ENCODE measurements at regions of chr7 and their contacts with region 1.

Region 1: DNA sequence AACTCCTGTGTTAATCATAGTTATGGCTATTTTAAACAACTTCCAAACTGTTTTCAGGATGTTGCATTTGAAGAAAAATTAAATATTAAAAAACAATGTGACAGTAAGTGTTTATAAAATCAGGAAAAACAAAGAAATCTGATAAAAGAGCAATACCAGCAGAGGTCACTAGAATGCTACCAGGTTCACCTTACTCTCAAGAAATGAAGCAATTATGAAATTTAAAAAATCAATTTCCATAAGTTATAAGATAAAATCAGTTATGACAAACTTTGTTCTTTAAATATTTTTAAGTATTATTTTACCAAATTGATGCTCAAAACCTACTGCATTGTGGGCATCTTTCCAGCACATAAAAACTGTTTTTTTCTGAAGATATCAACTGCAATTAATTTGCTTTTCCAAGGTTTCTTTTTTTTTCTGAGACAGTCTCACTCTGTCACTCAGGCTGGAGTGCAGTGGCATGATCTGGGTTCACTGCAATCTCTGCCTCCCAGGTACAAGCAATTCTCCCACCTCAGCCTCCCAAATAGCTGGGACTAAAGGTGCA is 50.7 kb upstream of the RHEB start:
- DNase-seq: peak; percentile 47
- ATAC-seq: no peak
- H3K4me3 ChIP-seq: no peak overlapping the region
- H3K27ac ChIP-seq: no peak overlapping the region
- H3K4me1 ChIP-seq: peaks cover 4% of the 10 kb centered on the region
- H3K27me3 ChIP-seq: no peaks in the 10 kb centered on the region
- CTCF ChIP-seq: peak; percentile 67
- POLR2A ChIP-seq: no peak
- RAD21 ChIP-seq: peak; percentile 75

Region 2: GRCh38 chr7:151665368-151665767 is 94.9 kb after region 1 on chr7:
- CTCF ChIA-PET with region 1: no interaction called
- POLR2A ChIA-PET with region 1: no interaction called
- dilution Hi-C with region 1: no loop called
- in situ Hi-C with region 1: no loop called
- intact Hi-C with region 1: no loop called
- DNase-seq: peak; percentile 96
- ATAC-seq: peak; percentile 83
- H3K4me3 ChIP-seq: no peak overlapping the region
- H3K27ac ChIP-seq: peak overlapping the region; percentile 76; the same call in 1 of the 2 replicates
- H3K4me1 ChIP-seq: peaks cover 13% of the 10 kb centered on the region
- H3K27me3 ChIP-seq: no peaks in the 10 kb centered on the region
- CTCF ChIP-seq: no peak
- POLR2A ChIP-seq: no peak
- RAD21 ChIP-seq: no peak

Region 3: DNA sequence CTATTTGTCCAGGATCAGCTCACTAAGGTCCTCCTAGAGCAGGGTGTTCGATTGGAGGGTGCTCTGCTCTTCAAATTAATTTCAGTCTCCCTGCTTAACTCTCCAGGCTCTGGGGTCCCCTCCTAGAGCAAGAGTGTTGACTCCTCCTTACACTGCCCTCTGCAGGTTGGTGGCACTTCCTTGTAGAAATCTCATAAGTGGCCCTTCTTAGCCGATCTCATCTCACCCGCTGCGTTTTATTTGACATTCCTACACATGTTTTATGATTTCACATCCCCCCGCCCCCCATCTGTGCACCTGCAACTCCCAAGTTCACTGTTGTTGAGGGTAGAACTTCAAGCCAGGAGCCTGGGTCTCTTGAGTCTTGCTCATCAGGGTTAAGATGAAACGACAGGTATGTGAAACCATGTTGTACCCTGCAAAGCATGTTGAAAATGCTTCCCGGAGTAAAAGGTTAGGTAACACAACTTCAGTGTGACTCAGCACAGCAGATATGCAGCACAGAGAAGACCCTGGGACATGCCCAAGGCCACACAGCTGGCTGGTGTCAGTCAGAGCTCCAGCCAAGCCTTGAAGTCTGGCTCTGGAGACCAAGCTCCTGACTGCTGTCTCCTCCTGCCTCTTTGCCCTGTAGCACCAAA is 135.3 kb after region 1 on chr7:
- CTCF ChIA-PET with region 1: interaction called, 3 read pairs
- POLR2A ChIA-PET with region 1: no interaction called
- dilution Hi-C with region 1: no loop called
- in situ Hi-C with region 1: no loop called
- intact Hi-C with region 1: loop called (anchors 5 kb)
- DNase-seq: peak; percentile 52
- ATAC-seq: peak; percentile 74
- H3K4me3 ChIP-seq: no peak overlapping the region
- H3K27ac ChIP-seq: no peak overlapping the region
- H3K4me1 ChIP-seq: peaks cover 9% of the 10 kb centered on the region; the same call in 1 of the 2 replicates
- H3K27me3 ChIP-seq: no peaks in the 10 kb centered on the region; the same call in 1 of the 2 replicates
- CTCF ChIP-seq: peak; percentile 55
- POLR2A ChIP-seq: no peak
- RAD21 ChIP-seq: peak; percentile 63

Region 4: GRCh38 chr7:151759591-151760042 is 189.2 kb after region 1 on chr7:
- CTCF ChIA-PET with region 1: interaction called, 4 read pairs
- POLR2A ChIA-PET with region 1: no interaction called
- dilution Hi-C with region 1: no loop called
- in situ Hi-C with region 1: no loop called
- intact Hi-C with region 1: loop called (anchors 1 kb)
- DNase-seq: peak; percentile 65
- ATAC-seq: peak; percentile 59
- H3K4me3 ChIP-seq: no peak overlapping the region
- H3K27ac ChIP-seq: no peak overlapping the region
- H3K4me1 ChIP-seq: peaks cover 30% of the 10 kb centered on the region
- H3K27me3 ChIP-seq: peaks cover 32% of the 10 kb centered on the region
- CTCF ChIP-seq: peak; percentile 88
- POLR2A ChIP-seq: no peak
- RAD21 ChIP-seq: peak; percentile 96

Region 5: DNA sequence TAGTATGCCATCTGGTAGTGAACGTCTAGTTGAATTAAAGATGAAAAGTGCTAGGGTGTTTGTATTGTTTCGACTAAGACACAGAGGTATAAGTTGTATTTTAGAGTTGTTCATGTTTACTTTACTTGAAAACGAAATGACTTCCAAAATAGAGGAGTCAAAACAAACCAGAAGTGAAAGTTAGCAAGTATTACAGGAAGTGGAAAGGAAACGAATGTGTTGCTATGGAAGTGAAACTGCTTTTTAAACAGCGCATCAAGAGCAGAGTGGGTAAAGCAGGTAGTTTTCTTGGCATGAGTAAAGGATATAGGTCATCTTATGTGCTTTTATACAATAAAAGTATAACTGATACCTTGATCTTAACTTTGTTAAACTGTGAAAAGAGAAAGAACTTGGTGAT is 365.8 kb after region 1 on chr7:
- CTCF ChIA-PET with region 1: no interaction called
- POLR2A ChIA-PET with region 1: no interaction called
- dilution Hi-C with region 1: no loop called
- in situ Hi-C with region 1: no loop called
- intact Hi-C with region 1: no loop called
- DNase-seq: no peak
- ATAC-seq: no peak
- H3K4me3 ChIP-seq: no peak overlapping the region
- H3K27ac ChIP-seq: no peak overlapping the region
- H3K4me1 ChIP-seq: no peaks in the 10 kb centered on the region
- H3K27me3 ChIP-seq: peaks cover 2% of the 10 kb centered on the region
- CTCF ChIP-seq: no peak
- POLR2A ChIP-seq: no peak
- RAD21 ChIP-seq: no peak